SK-N-SH (cell line): ENCODE measurements at regions of chr1 and their contacts with region 1.

Region 1: DNA sequence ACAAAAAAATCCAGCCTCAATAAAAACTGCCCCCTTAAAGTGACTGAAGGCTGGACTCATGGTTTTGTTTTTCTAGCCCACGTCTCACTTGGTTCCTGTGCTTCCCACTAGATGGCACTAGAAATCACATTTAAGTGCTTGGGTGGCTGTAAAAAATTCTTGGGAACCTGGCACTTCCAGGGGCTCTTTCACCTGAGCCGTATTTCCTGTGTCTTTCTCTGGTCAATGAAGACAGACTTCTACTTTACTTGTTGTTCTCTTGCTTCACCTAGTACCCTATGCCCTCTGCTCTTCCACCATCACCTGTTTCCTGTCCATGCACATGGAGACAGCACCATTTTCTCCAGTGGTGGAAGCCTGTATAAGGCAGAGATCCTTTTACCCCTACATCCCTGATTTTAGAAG is 20.0 kb downstream of the METTL13 start:
- DNase-seq: peak; percentile 60
- H3K4me3 ChIP-seq: no peak overlapping the region
- H3K27ac ChIP-seq: no peak overlapping the region
- H3K4me1 ChIP-seq: no peaks in the 10 kb centered on the region
- H3K27me3 ChIP-seq: no peaks in the 10 kb centered on the region
- CTCF ChIP-seq: peak; percentile 86
- EP300 ChIP-seq: no peak
- RAD21 ChIP-seq: peak; percentile 84

Region 2: GRCh38 chr1:171769171-171769570 is 32.3 kb before region 1 on chr1:
- CTCF ChIA-PET with region 1: no interaction called
- POLR2A ChIA-PET with region 1: no interaction called
- DNase-seq: no peak
- H3K4me3 ChIP-seq: no peak overlapping the region
- H3K27ac ChIP-seq: no peak overlapping the region
- H3K4me1 ChIP-seq: no peaks in the 10 kb centered on the region
- H3K27me3 ChIP-seq: no peaks in the 10 kb centered on the region; the same call in 1 of the 2 replicates
- CTCF ChIP-seq: no peak
- EP300 ChIP-seq: no peak
- RAD21 ChIP-seq: no peak

Region 3: GRCh38 chr1:171781176-171781875 is 20.2 kb before region 1 on chr1 and contains the start of gene METTL13:
- CTCF ChIA-PET with region 1: interaction called, 74 read pairs
- POLR2A ChIA-PET with region 1: no interaction called
- DNase-seq: peak; percentile 96
- H3K4me3 ChIP-seq: peak within 1 kb of the TSS; percentile 78 to 79
- H3K27ac ChIP-seq: peak within 1 kb of the TSS; percentile 84 to 96
- H3K4me1 ChIP-seq: peaks cover 9 to 29% of the 10 kb centered on the region in 2 experiments; a peak in 2 of 4 replicates
- H3K27me3 ChIP-seq: no peaks in the 10 kb centered on the region
- CTCF ChIP-seq: no peak
- EP300 ChIP-seq: peak in 1 of 2 experiments; percentile 11; a peak in 1 of 4 replicates
- RAD21 ChIP-seq: no peak
- polyA plus RNA-seq, gene METTL13: 32.7 and 41.2 TPM in 2 replicates

Region 4: GRCh38 chr1:171817511-171818265 is 16.2 kb after region 1 on chr1:
- CTCF ChIA-PET with region 1: interaction called, 27 read pairs
- POLR2A ChIA-PET with region 1: no interaction called
- DNase-seq: peak; percentile 13
- H3K4me3 ChIP-seq: no peak overlapping the region
- H3K27ac ChIP-seq: peak overlapping the region in 1 of 2 experiments; percentile 23; a peak in 1 of 4 replicates
- H3K4me1 ChIP-seq: peaks cover 3 to 4% of the 10 kb centered on the region in 2 experiments; a peak in 2 of 4 replicates
- H3K27me3 ChIP-seq: no peaks in the 10 kb centered on the region
- CTCF ChIP-seq: no peak
- EP300 ChIP-seq: no peak
- RAD21 ChIP-seq: no peak

Region 5: GRCh38 chr1:171828794-171829193 is 27.3 kb after region 1 on chr1:
- CTCF ChIA-PET with region 1: interaction called, 15 read pairs
- POLR2A ChIA-PET with region 1: interaction called, 3 read pairs
- DNase-seq: no peak
- H3K4me3 ChIP-seq: no peak overlapping the region
- H3K27ac ChIP-seq: no peak overlapping the region
- H3K4me1 ChIP-seq: no peaks in the 10 kb centered on the region
- H3K27me3 ChIP-seq: peaks cover 8% of the 10 kb centered on the region; the same call in 1 of the 2 replicates
- CTCF ChIP-seq: no peak
- EP300 ChIP-seq: no peak
- RAD21 ChIP-seq: no peak